ENCODE measurements at regions of chr7 and their contacts with region 1.

Region 1: GRCh38 chr7:123797673-123798527 is 47.1 kb upstream of the HYAL4 start:
- DNase-seq: no peak
- H3K4me3 Mint-ChIP-seq: no peak overlapping the region
- H3K27ac Mint-ChIP-seq: no peak overlapping the region
- H3K4me1 Mint-ChIP-seq: peaks cover 2% of the 10 kb centered on the region
- H3K27me3 Mint-ChIP-seq: no peaks in the 10 kb centered on the region

Region 2: GRCh38 chr7:123865517-123866117 is 67.7 kb after region 1 on chr7:
- intact Hi-C with region 1: loop called (anchors 1 kb)
- DNase-seq: peak; percentile 84
- H3K4me3 Mint-ChIP-seq: no peak overlapping the region
- H3K27ac Mint-ChIP-seq: no peak overlapping the region
- H3K4me1 Mint-ChIP-seq: no peaks in the 10 kb centered on the region
- H3K27me3 Mint-ChIP-seq: peaks cover 7% of the 10 kb centered on the region

Measured in activated CD4-positive, alpha-beta T cell treated with anti-CD3 and anti-CD28 coated beads, Interleukin-2, amount 10 ng/mL, durations not matched to agents 24 days and 14 days (primary cell).